ENCODE measurements at regions of chr14 and their contacts with region 1.

Region 1: DNA sequence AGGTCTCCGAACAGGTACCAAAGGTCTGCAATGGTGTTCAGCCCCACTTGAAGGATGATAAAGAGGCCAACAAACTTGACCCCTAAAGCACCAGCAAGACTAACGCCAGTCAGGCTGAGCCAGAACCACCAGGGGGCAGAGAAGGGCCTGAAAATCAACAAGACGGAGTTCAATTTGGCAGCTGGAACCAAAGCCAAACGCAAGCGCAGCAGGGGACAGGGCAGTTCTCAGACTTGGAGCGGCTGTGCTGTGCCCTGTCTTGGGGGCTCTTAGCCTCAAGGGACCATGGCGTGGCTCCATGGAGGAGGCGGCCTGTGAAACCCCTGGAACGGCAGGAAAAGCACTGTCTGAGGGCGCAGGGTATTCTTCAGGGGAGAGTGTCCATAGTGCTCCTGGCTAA is 19.6 kb downstream of the POMT2 start:
- DNase-seq: peak; percentile 84
- ATAC-seq: no peak
- H3K4me3 Mint-ChIP-seq: no peak overlapping the region
- H3K27ac Mint-ChIP-seq: no peak overlapping the region
- H3K4me1 Mint-ChIP-seq: peaks cover 24% of the 10 kb centered on the region
- H3K27me3 Mint-ChIP-seq: no peaks in the 10 kb centered on the region

Region 2: GRCh38 chr14:76968621-76969063 is 332.5 kb before region 1 on chr14:
- CTCF ChIA-PET with region 1: no interaction called
- POLR2A ChIA-PET with region 1: no interaction called
- intact Hi-C with region 1: loop called (anchors 5 to 10 kb)
- DNase-seq: no peak
- ATAC-seq: no peak
- H3K4me3 Mint-ChIP-seq: no peak overlapping the region
- H3K27ac Mint-ChIP-seq: no peak overlapping the region
- H3K4me1 Mint-ChIP-seq: peaks cover 25% of the 10 kb centered on the region
- H3K27me3 Mint-ChIP-seq: no peaks in the 10 kb centered on the region

Region 3: DNA sequence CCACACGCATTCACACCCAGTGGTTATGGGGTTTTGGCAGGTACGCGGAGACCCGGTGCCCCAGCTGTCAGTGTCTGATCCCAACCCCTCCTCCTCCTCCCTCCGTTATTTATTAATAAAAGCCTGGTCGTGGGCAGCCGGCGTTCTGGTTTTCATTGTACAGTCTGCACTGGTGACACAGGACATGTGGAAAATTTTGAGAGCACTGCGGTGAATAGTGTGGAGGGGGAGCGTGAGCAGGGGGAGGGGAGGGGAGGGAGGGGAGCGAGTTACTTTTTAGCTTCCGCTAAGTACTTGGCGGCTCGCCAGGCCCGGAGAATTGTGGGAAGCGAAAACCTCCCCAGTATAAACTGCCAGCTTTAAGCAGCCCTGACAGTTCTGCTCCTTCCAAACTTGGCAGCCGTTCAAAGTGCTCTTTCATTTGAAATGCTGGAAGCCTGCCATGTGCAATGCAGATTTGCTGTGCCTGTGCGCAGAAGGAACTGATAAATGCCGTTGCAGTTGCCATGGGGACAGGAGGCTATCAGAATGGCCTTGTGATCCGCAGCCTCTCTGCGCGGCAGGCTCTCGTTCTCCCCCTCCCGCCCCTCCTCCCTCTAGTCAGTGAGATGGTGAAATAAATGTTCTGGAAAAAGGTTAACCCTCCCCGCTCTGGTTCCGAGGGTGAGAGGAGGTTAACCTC is 260.9 kb before region 1 on chr14:
- CTCF ChIA-PET with region 1: no interaction called
- POLR2A ChIA-PET with region 1: no interaction called
- intact Hi-C with region 1: loop called in 1 of 2 experiments (anchors 5 kb)
- DNase-seq: peak; percentile 98
- ATAC-seq: peak; percentile 66
- H3K4me3 Mint-ChIP-seq: peak overlapping the region; percentile 63
- H3K27ac Mint-ChIP-seq: peak overlapping the region; percentile 93
- H3K4me1 Mint-ChIP-seq: peaks cover 89% of the 10 kb centered on the region
- H3K27me3 Mint-ChIP-seq: no peaks in the 10 kb centered on the region

Region 4: GRCh38 chr14:77314043-77314442 is 12.9 kb after region 1 on chr14:
- CTCF ChIA-PET with region 1: interaction called, 176 read pairs
- POLR2A ChIA-PET with region 1: no interaction called
- intact Hi-C with region 1: loop called (anchors 1 kb)
- DNase-seq: no peak
- ATAC-seq: no peak
- H3K4me3 Mint-ChIP-seq: no peak overlapping the region
- H3K27ac Mint-ChIP-seq: no peak overlapping the region
- H3K4me1 Mint-ChIP-seq: no peaks in the 10 kb centered on the region
- H3K27me3 Mint-ChIP-seq: no peaks in the 10 kb centered on the region

Region 5: DNA sequence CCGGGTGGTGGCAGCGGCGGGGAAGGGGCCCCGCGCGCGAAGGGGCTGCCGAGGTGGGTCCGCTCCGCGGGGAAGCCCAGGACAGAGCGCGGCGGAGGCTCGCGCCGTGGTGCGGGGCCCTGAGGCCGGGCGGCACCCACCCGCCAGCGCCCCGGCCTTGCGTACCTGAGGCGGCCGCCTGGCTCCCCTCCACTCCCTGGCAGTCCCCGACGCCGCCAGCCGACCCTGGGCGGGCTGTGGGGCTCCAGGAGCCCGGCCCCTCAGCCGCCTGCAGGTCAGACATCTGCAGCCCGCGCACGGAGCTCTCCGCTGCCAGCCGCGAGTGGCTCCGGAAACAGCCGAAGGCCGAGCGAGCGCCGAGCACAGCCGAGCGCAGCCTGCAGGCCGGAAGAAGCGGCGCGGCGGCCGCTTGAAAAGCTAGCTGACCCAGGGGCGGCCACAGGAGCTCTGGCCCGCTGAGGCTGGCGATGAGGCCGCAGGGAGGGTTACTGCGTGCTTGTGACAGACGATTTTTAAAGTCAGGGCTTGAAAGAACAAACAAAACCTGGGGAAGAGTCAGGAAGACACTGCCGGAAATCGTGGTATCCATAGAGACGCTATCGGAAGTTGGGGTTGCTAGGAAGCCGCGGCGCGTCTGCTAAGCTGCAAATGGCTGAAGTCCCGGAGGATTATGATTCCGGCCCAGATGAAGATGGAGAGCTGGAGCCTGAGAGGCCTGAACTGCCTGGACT is 75.8 kb after region 1 on chr14 and contains the starts of genes SAMD15 and TMED8:
- CTCF ChIA-PET with region 1: interaction called, 5 read pairs
- POLR2A ChIA-PET with region 1: no interaction called
- intact Hi-C with region 1: loop called (anchors 1 to 5 kb)
- DNase-seq: peak; percentile 91
- ATAC-seq: peak; percentile 95
- H3K4me3 Mint-ChIP-seq: no peak within 1 kb of the TSS
- H3K27ac Mint-ChIP-seq: peak within 1 kb of the TSS; percentile 86
- H3K4me1 Mint-ChIP-seq: peaks cover 40% of the 10 kb centered on the region
- H3K27me3 Mint-ChIP-seq: no peaks in the 10 kb centered on the region
- total RNA-seq, gene SAMD15: 0.25 TPM
- total RNA-seq, gene TMED8: 25.3 to 27.9 TPM

Region 6: DNA sequence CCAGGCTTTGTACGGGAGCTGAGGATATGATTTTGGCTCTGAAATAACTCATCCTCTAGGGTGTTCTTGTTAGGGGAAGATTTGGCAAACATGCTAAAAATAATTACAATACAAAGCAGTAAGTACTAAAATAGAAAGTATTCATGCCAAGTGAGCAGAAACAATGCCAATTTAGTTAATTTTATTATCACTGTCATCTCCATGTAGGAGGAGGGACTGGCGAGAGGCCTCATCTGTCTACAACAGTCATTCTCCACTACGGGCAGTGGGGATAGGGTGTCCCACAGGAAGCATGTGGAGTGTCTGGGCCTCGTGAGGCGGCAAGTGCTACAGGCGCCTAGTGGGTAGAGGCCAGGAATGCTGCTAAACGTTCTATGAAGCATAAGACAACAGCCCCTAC is 194.2 kb after region 1 on chr14:
- CTCF ChIA-PET with region 1: no interaction called
- POLR2A ChIA-PET with region 1: no interaction called
- intact Hi-C with region 1: no loop called
- DNase-seq: no peak
- ATAC-seq: no peak
- H3K4me3 Mint-ChIP-seq: no peak overlapping the region
- H3K27ac Mint-ChIP-seq: no peak overlapping the region
- H3K4me1 Mint-ChIP-seq: peaks cover 6% of the 10 kb centered on the region
- H3K27me3 Mint-ChIP-seq: peaks cover 26% of the 10 kb centered on the region

Region 7: GRCh38 chr14:77707724-77708408 is 406.8 kb after region 1 on chr14 and contains the starts of genes ALKBH1 and SLIRP:
- CTCF ChIA-PET with region 1: no interaction called
- POLR2A ChIA-PET with region 1: no interaction called
- intact Hi-C with region 1: loop called in 1 of 2 experiments (anchors 5 kb)
- DNase-seq: peak; percentile 93
- ATAC-seq: peak; percentile 98
- H3K4me3 Mint-ChIP-seq: peak within 1 kb of the TSS; percentile 95
- H3K27ac Mint-ChIP-seq: peak within 1 kb of the TSS; percentile 94
- H3K4me1 Mint-ChIP-seq: peaks cover 45% of the 10 kb centered on the region
- H3K27me3 Mint-ChIP-seq: no peaks in the 10 kb centered on the region
- total RNA-seq, gene ALKBH1: 16.3 to 16.8 TPM
- total RNA-seq, gene SLIRP: 143 to 156 TPM

Measured in activated CD4-positive, alpha-beta T cell treated with anti-CD3 and anti-CD28 coated beads for 36 hours (primary cell).